A549 (cell line): ENCODE measurements at regions of chr16 and their contacts with region 1.

Region 1: GRCh38 chr16:57462209-57462977 is at the start of gene POLR2C:
- DNase-seq: peak; percentile 85 to 91
- ATAC-seq: peak; percentile 93 to 97
- H3K4me3 ChIP-seq: peak within 1 kb of the TSS; percentile 82
- H3K27ac ChIP-seq: peak within 1 kb of the TSS; percentile 93 to 97
- H3K4me1 ChIP-seq: peaks cover 37% of the 10 kb centered on the region
- CTCF ChIP-seq: peak; percentile 82
- EP300 ChIP-seq: no peak
- POLR2A ChIP-seq: peak; percentile 99
- RAD21 ChIP-seq: peak; percentile 39 to 56; a peak in 4 of 5 replicates
- polyA plus RNA-seq, gene POLR2C: 229 and 259 TPM in 2 replicates

Region 2: GRCh38 chr16:57289391-57290257 is 172.8 kb before region 1 on chr16:
- CTCF ChIA-PET with region 1: no interaction called
- POLR2A ChIA-PET with region 1: no interaction called
- DNase-seq: no peak
- ATAC-seq: no peak; a peak in 1 of 6 replicates
- H3K4me3 ChIP-seq: no peak overlapping the region
- H3K27ac ChIP-seq: no peak overlapping the region
- H3K4me1 ChIP-seq: 0 out of 3 replicates have a peak, but pooled peaks cover 5% of the 10 kb centered on the region
- CTCF ChIP-seq: no peak
- EP300 ChIP-seq: no peak
- POLR2A ChIP-seq: no peak
- RAD21 ChIP-seq: no peak

Region 3: GRCh38 chr16:57447186-57447962 is 15.0 kb before region 1 on chr16 and contains the starts of genes CIAPIN1 and COQ9:
- CTCF ChIA-PET with region 1: interaction called, 26 read pairs
- POLR2A ChIA-PET with region 1: interaction called, 21 read pairs
- DNase-seq: peak; percentile 89 to 93
- ATAC-seq: peak; percentile 100
- H3K4me3 ChIP-seq: peak within 1 kb of the TSS; percentile 96
- H3K27ac ChIP-seq: peak within 1 kb of the TSS; percentile 99
- H3K4me1 ChIP-seq: peaks cover 27% of the 10 kb centered on the region
- CTCF ChIP-seq: no peak
- EP300 ChIP-seq: no peak
- POLR2A ChIP-seq: peak; percentile 83
- RAD21 ChIP-seq: 0 out of 5 replicates have a peak, but pooled peaks of 1 of the 2 experiments have one; percentile 10
- polyA plus RNA-seq, gene CIAPIN1: 101 and 114 TPM in 2 replicates
- polyA plus RNA-seq, gene COQ9: 109 and 130 TPM in 2 replicates

Region 4: DNA sequence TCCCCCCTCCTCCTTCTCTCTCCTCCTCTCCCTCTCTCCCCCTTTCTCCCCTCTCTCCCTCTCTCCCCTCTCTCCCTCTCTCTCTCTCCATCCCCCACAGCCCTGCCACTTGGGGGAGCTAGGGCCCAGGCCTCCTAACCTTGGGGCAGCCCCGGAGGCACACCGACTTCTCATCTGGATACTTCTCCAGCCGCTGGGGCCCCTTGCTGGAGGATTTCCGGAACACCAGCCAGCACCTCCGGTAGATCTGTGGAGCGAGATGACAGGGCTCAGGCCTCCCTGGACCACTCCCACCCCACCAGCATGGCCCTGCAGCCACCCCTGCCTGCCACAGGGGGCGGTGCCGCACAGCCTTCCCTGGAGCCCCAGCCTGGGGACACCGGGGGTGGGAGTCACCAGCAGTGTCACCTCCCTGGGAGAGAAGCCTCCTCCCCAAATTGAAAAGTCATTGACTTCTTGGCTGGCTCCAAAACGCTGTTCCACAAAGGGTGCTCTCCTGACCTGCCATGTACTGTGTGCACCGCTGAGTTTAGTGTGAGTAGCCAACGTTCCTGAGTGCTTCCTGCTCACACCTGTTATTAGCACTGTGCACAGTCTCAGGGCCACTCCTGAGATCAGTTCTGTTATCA is 13.4 kb after region 1 on chr16:
- CTCF ChIA-PET with region 1: interaction called, 48 read pairs
- POLR2A ChIA-PET with region 1: interaction called, 25 read pairs
- DNase-seq: peak; percentile 77 to 82
- ATAC-seq: peak; percentile 44 to 69
- H3K4me3 ChIP-seq: peak overlapping the region; percentile 21; the same call in 1 of the 3 replicates
- H3K27ac ChIP-seq: peak overlapping the region; percentile 96 to 98
- H3K4me1 ChIP-seq: peaks cover 97% of the 10 kb centered on the region
- CTCF ChIP-seq: peak; percentile 58
- EP300 ChIP-seq: no peak
- POLR2A ChIP-seq: no peak
- RAD21 ChIP-seq: peak in 1 of 2 experiments; percentile 59; a peak in 4 of 5 replicates

Region 5: DNA sequence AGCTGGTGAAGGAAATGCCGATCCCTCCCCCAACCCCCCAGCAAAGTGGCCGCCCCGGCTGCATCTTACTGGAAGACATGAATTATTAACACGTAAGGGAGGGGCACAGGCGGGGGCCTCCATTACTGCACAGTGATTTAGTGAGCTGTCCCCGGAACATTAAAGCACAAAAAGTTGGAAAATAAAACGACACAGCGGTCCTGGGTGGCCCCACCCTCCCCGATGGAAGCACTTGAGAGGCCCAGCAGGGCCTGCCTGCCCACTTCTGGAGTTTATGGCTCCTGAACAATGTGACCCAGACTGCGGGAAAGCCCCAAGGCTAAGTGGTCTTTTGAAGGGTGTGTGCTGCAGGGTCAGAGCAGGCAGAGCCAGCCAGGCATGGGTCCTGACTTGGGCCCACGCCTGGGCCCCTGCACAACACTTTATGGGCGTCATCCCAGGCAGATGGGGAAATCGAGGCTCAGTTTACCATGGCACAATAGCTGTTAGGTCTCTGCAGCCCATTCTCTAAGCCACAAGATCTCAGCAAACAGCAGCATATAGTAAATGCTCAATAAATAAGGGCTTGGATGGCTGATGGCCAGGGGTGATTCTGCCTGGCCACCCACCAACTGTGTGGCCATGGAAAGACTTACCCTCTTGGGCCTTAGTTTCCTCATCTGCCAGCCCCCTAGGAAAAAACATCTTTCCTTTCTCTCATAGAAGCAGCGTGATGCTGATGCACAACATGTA is 51.1 kb after region 1 on chr16:
- CTCF ChIA-PET with region 1: interaction called, 54 read pairs
- POLR2A ChIA-PET with region 1: interaction called, 6 read pairs
- DNase-seq: peak in 1 of 2 experiments; percentile 46
- ATAC-seq: peak in 1 of 2 experiments; percentile 38; a peak in 3 of 6 replicates
- H3K4me3 ChIP-seq: no peak overlapping the region
- H3K27ac ChIP-seq: peak overlapping the region; percentile 44 to 57; a peak in 5 of 6 replicates
- H3K4me1 ChIP-seq: peaks cover 11% of the 10 kb centered on the region
- CTCF ChIP-seq: no peak
- EP300 ChIP-seq: no peak
- POLR2A ChIP-seq: no peak
- RAD21 ChIP-seq: no peak

Region 6: GRCh38 chr16:57530104-57530521 is 67.7 kb after region 1 on chr16:
- CTCF ChIA-PET with region 1: interaction called, 17 read pairs
- POLR2A ChIA-PET with region 1: interaction called, 3 read pairs
- DNase-seq: no peak
- ATAC-seq: peak; percentile 39 to 71; a peak in 4 of 6 replicates
- H3K4me3 ChIP-seq: no peak overlapping the region
- H3K27ac ChIP-seq: peak overlapping the region; percentile 65 to 79
- H3K4me1 ChIP-seq: peaks cover 55% of the 10 kb centered on the region
- CTCF ChIP-seq: no peak
- EP300 ChIP-seq: no peak
- POLR2A ChIP-seq: no peak
- RAD21 ChIP-seq: no peak